CD8-positive, alpha-beta memory T cell (primary cell): ENCODE measurements at regions of chr15 and their contacts with region 1.

Region 1: DNA sequence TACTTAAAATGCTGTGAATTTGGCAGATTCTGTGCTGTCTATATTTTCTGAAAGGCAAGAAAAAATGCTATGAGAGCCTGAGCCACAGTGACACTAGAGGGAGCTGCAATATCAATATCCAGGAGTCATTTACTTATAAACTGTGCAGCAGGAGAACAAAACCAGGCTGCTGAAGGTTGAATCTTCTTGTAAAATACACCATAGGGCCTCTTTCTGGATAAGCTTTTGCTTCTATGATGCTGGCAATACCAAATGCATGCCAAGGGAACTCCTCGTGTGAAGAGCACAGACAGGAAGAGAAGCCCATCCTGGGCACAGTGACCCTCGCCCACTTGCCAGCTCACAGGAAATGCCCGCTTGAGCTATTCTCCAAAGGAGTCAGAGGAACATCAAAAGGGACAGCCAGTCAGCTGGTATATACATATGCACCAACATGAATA is 48.0 kb upstream of the TSPAN3 start:
- DNase-seq: peak in 4 of 5 donors; percentile 17 to 56 (median 45)
- H3K4me3 ChIP-seq: no peak overlapping the region
- H3K4me3 Mint-ChIP-seq: peak overlapping the region in 2 of 7 donors; percentile 8
- H3K27ac ChIP-seq: no peak overlapping the region
- H3K27ac Mint-ChIP-seq: peak overlapping the region in 4 of 8 donors; percentile 1 to 70 (median 37)
- H3K4me1 ChIP-seq: peaks cover 9% of the 10 kb centered on the region
- H3K4me1 Mint-ChIP-seq: peaks cover 8 to 26% (median 18%) of the 10 kb centered on the region in 3 donors
- H3K27me3 ChIP-seq: no peaks in the 10 kb centered on the region
- H3K27me3 Mint-ChIP-seq: no peaks in the 10 kb centered on the region

Region 2: GRCh38 chr15:77099741-77100463 is 19.0 kb before region 1 on chr15:
- CTCF ChIA-PET with region 1: interaction called, 11 read pairs
- POLR2A ChIA-PET with region 1: no interaction called
- DNase-seq: no peak
- H3K4me3 ChIP-seq: no peak overlapping the region
- H3K4me3 Mint-ChIP-seq: no peak overlapping the region
- H3K27ac ChIP-seq: no peak overlapping the region
- H3K27ac Mint-ChIP-seq: peak overlapping the region in 1 of 8 donors; percentile 6
- H3K4me1 ChIP-seq: no peaks in the 10 kb centered on the region
- H3K4me1 Mint-ChIP-seq: no peaks in the 10 kb centered on the region
- H3K27me3 ChIP-seq: no peaks in the 10 kb centered on the region
- H3K27me3 Mint-ChIP-seq: peaks cover 0 to 8% of the 10 kb centered on the region in 2 donors

Region 3: GRCh38 chr15:77144492-77145070 is 25.7 kb after region 1 on chr15:
- CTCF ChIA-PET with region 1: no interaction called
- POLR2A ChIA-PET with region 1: no interaction called
- DNase-seq: no peak
- H3K4me3 ChIP-seq: no peak overlapping the region
- H3K4me3 Mint-ChIP-seq: no peak overlapping the region
- H3K27ac ChIP-seq: no peak overlapping the region
- H3K27ac Mint-ChIP-seq: peak overlapping the region in 5 of 8 donors; percentile 37 to 88 (median 70)
- H3K4me1 ChIP-seq: no peaks in the 10 kb centered on the region
- H3K4me1 Mint-ChIP-seq: peaks cover 7 to 9% (median 9%) of the 10 kb centered on the region in 3 donors
- H3K27me3 ChIP-seq: no peaks in the 10 kb centered on the region
- H3K27me3 Mint-ChIP-seq: peaks cover 0 to 1% of the 10 kb centered on the region in 2 donors

Region 4: GRCh38 chr15:77496710-77497103 is 377.8 kb after region 1 on chr15:
- CTCF ChIA-PET with region 1: interaction called, 43 read pairs
- POLR2A ChIA-PET with region 1: no interaction called
- DNase-seq: peak; percentile 52 to 76 (median 55)
- H3K4me3 ChIP-seq: no peak overlapping the region
- H3K4me3 Mint-ChIP-seq: no peak overlapping the region
- H3K27ac ChIP-seq: no peak overlapping the region
- H3K27ac Mint-ChIP-seq: no peak overlapping the region
- H3K4me1 ChIP-seq: peaks cover 16% of the 10 kb centered on the region
- H3K4me1 Mint-ChIP-seq: peaks cover 14 to 25% (median 20%) of the 10 kb centered on the region in 3 donors
- H3K27me3 ChIP-seq: no peaks in the 10 kb centered on the region
- H3K27me3 Mint-ChIP-seq: no peaks in the 10 kb centered on the region

Region 5: DNA sequence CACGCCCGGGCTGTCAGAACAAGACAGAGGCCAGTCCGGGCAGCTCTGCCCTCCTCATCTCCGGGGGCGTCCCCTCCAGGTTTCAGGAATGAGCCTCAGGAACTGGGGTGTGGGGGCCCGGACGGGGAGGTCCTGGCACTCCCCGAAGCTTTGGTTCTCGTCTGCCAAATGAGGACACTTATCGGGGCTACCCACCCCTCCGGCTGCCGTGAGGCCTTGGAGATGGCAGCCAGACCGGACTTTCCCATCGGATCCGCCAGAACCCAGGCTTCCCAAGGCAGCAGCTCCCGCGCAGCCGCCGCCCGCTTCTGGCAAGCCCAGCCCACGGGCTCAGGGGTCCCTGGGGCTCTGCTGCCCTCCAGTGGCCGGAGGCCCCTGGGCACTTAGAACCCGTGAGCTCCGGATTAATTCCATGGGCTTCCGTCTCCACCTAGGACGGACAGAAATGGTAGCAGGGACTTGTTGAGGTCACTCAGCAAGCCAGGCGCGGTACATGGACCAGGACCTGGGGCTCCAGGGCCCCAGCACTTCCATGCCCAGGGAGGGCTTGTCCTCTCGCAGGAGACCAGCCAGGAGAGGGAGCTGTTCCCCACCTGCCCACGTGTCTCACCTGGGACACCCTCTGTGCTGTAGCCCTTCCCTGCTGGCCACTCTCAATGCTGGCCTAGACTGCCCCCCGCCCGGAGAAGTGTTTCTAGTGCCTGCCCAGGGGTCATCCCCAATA is 424.4 kb after region 1 on chr15:
- CTCF ChIA-PET with region 1: interaction called, 28 read pairs
- POLR2A ChIA-PET with region 1: no interaction called
- DNase-seq: peak; percentile 57 to 80 (median 63)
- H3K4me3 ChIP-seq: peak overlapping the region; percentile 77
- H3K4me3 Mint-ChIP-seq: peak overlapping the region; percentile 70 to 92 (median 79)
- H3K27ac ChIP-seq: peak overlapping the region; percentile 43
- H3K27ac Mint-ChIP-seq: peak overlapping the region in 4 of 8 donors; percentile 15 to 73 (median 42)
- H3K4me1 ChIP-seq: peaks cover 13% of the 10 kb centered on the region
- H3K4me1 Mint-ChIP-seq: peaks cover 0 to 18% (median 4%) of the 10 kb centered on the region in 3 donors
- H3K27me3 ChIP-seq: no peaks in the 10 kb centered on the region
- H3K27me3 Mint-ChIP-seq: peaks cover under 1 to 3% of the 10 kb centered on the region in 2 donors